ENCODE measurements at regions of chr7 and their contacts with region 1.

Region 1: GRCh38 chr7:1412322-1413261 is 46.7 kb downstream of the MICALL2 start:
- DNase-seq: peak; percentile 80 to 97 (median 89)
- ATAC-seq: peak; percentile 91
- H3K4me3 ChIP-seq: peak overlapping the region; percentile 23 to 30
- H3K4me3 Mint-ChIP-seq: peak overlapping the region; percentile 61
- H3K27ac ChIP-seq: peak overlapping the region in 1 of 2 experiments; percentile 22
- H3K27ac Mint-ChIP-seq: no peak overlapping the region
- H3K4me1 ChIP-seq: peaks cover 24% of the 10 kb centered on the region
- H3K4me1 Mint-ChIP-seq: peaks cover 13% of the 10 kb centered on the region
- H3K27me3 ChIP-seq: peaks cover 0 to 3% of the 10 kb centered on the region in 2 experiments
- H3K27me3 Mint-ChIP-seq: peaks cover 6% of the 10 kb centered on the region
- CTCF ChIP-seq: peak; percentile 81

Region 2: GRCh38 chr7:1193593-1194424 is 218.8 kb before region 1 on chr7:
- CTCF ChIA-PET with region 1: no interaction called
- POLR2A ChIA-PET with region 1: no interaction called
- intact Hi-C with region 1: loop called in 1 of 2 experiments (anchors 5 kb)
- DNase-seq: peak in 8 of 9 experiments; percentile 11 to 73 (median 41)
- ATAC-seq: no peak
- H3K4me3 ChIP-seq: no peak overlapping the region
- H3K4me3 Mint-ChIP-seq: no peak overlapping the region
- H3K27ac ChIP-seq: no peak overlapping the region
- H3K27ac Mint-ChIP-seq: no peak overlapping the region
- H3K4me1 ChIP-seq: peaks cover 12% of the 10 kb centered on the region
- H3K4me1 Mint-ChIP-seq: peaks cover 8% of the 10 kb centered on the region
- H3K27me3 ChIP-seq: no peaks in the 10 kb centered on the region
- H3K27me3 Mint-ChIP-seq: peaks cover 17% of the 10 kb centered on the region
- CTCF ChIP-seq: peak; percentile 15

Region 3: DNA sequence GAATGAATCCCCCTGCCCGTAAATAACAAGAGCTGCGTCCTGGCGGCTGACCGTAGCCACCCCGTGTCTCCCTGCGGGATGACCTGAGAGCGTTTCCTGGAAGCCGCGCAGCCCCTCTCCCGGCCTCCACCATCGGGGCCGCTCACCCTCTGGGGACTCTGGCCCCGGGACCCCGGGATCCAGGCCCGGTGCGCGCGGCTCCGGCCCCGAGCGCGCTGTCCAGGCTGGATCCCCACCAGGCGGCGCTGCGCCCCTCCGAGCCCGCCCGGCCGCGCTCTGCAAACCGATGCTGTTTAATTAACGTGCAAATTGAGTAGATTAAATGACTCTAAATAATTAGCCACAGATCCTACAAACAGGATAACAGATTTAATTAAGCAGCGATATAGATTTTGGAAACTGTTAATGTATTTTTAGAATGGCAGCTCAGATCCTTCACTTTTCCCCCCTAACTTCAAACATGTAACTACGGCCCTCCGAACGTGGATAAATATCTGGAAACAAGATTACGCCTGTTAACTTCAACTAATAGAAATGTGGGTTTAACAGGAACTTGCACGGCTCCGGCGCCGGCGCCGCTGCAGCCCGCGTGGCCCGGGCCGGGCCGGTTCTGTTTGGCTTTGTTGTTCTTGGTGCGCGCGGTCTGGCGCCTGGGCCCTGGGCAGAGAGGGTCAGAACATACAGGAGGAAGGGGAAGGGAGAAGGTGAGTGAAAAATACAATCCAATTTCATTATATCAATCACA is 187.0 kb before region 1 on chr7:
- CTCF ChIA-PET with region 1: interaction called, 3 read pairs
- POLR2A ChIA-PET with region 1: no interaction called
- intact Hi-C with region 1: loop called (anchors 1 to 2 kb)
- DNase-seq: peak in 8 of 9 experiments; percentile 21 to 64 (median 50)
- ATAC-seq: peak; percentile 61
- H3K4me3 ChIP-seq: no peak overlapping the region
- H3K4me3 Mint-ChIP-seq: no peak overlapping the region
- H3K27ac ChIP-seq: no peak overlapping the region
- H3K27ac Mint-ChIP-seq: no peak overlapping the region
- H3K4me1 ChIP-seq: peaks cover 8% of the 10 kb centered on the region
- H3K4me1 Mint-ChIP-seq: peaks cover 7% of the 10 kb centered on the region
- H3K27me3 ChIP-seq: peaks cover 44 to 49% of the 10 kb centered on the region in 2 experiments
- H3K27me3 Mint-ChIP-seq: peaks cover 60% of the 10 kb centered on the region
- CTCF ChIP-seq: peak; percentile 81

Region 4: GRCh38 chr7:1459522-1459892 is 46.9 kb after region 1 on chr7:
- CTCF ChIA-PET with region 1: no interaction called
- POLR2A ChIA-PET with region 1: no interaction called
- intact Hi-C with region 1: loop called (anchors 1 kb)
- DNase-seq: peak; percentile 90 to 98 (median 97)
- ATAC-seq: peak; percentile 95
- H3K4me3 ChIP-seq: peak overlapping the region; percentile 65 to 90
- H3K4me3 Mint-ChIP-seq: peak overlapping the region; percentile 77
- H3K27ac ChIP-seq: no peak overlapping the region
- H3K27ac Mint-ChIP-seq: no peak overlapping the region
- H3K4me1 ChIP-seq: peaks cover 24% of the 10 kb centered on the region
- H3K4me1 Mint-ChIP-seq: peaks cover 17% of the 10 kb centered on the region
- H3K27me3 ChIP-seq: no peaks in the 10 kb centered on the region
- H3K27me3 Mint-ChIP-seq: no peaks in the 10 kb centered on the region
- CTCF ChIP-seq: no peak

Measured in CD8-positive, alpha-beta T cell (primary cell).